ENCODE measurements at regions of chr19 and their contacts with region 1.

Region 1: DNA sequence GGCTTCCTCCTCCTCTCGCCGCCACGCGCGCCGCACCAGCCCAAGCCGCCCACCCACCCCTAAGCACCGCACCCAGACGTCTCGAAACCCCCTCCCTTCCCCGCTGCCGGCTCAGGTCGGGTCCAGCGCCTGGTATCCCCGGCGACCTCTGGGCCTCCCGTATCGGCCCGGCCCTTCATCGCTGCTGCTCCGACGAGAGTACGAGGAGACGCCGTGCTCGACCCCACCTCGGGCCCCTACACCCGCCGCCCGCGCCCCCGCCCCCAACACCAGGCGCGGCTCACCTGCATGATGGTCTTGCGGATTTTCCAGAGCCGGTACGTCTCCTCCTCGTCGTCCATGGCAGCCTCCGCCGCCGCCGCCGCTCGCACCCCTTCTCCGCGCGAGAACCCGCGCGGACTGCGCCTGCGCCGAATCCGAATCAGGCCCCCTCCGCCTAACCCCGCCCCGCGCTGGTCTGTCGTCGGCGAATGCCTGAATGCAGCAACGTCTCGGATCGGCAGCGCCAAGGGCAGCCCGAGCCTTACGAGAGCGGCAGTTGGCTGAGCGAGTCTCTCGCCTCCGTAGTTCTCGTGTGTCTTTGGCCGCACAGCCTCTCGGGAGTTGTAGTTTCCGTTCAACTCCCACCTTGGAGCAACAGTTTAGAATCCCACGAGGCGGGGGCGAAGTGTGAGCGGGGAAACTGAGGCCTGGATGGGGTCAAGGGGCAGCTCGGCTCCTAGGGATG is at the start of gene POLR2E:
- DNase-seq: peak; percentile 98 to 99 (median 98)
- H3K4me3 ChIP-seq: peak within 1 kb of the TSS; percentile 84
- H3K4me3 Mint-ChIP-seq: peak within 1 kb of the TSS; percentile 85 to 98 (median 89)
- H3K27ac ChIP-seq: peak within 1 kb of the TSS; percentile 59
- H3K27ac Mint-ChIP-seq: peak within 1 kb of the TSS; percentile 74 to 98 (median 90)
- H3K4me1 ChIP-seq: peaks cover 39% of the 10 kb centered on the region
- H3K4me1 Mint-ChIP-seq: peaks cover 34 to 56% (median 38%) of the 10 kb centered on the region in 3 donors
- H3K27me3 ChIP-seq: no peaks in the 10 kb centered on the region
- H3K27me3 Mint-ChIP-seq: peaks cover 0 to 2% of the 10 kb centered on the region in 2 donors
- total RNA-seq, gene POLR2E: 270 to 278 TPM

Region 2: GRCh38 chr19:900302-901111 is 194.6 kb before region 1 on chr19:
- CTCF ChIA-PET with region 1: no interaction called
- POLR2A ChIA-PET with region 1: interaction called, 13 read pairs
- DNase-seq: peak in 1 of 5 donors; percentile 30
- H3K4me3 ChIP-seq: no peak overlapping the region
- H3K4me3 Mint-ChIP-seq: no peak overlapping the region
- H3K27ac ChIP-seq: no peak overlapping the region
- H3K27ac Mint-ChIP-seq: peak overlapping the region in 4 of 8 donors; percentile 33 to 81 (median 60)
- H3K4me1 ChIP-seq: peaks cover 18% of the 10 kb centered on the region
- H3K4me1 Mint-ChIP-seq: peaks cover 0 to 39% (median 6%) of the 10 kb centered on the region in 3 donors
- H3K27me3 ChIP-seq: no peaks in the 10 kb centered on the region
- H3K27me3 Mint-ChIP-seq: no peaks in the 10 kb centered on the region

Region 3: GRCh38 chr19:1020868-1021425 is 74.2 kb before region 1 on chr19 and contains the start of gene TMEM259:
- CTCF ChIA-PET with region 1: interaction called, 3 read pairs
- POLR2A ChIA-PET with region 1: interaction called, 18 read pairs
- DNase-seq: peak; percentile 96 to 99 (median 98)
- H3K4me3 ChIP-seq: peak within 1 kb of the TSS; percentile 71
- H3K4me3 Mint-ChIP-seq: peak within 1 kb of the TSS; percentile 76 to 95 (median 89)
- H3K27ac ChIP-seq: peak within 1 kb of the TSS; percentile 97
- H3K27ac Mint-ChIP-seq: peak within 1 kb of the TSS; percentile 98 to 100 (median 99)
- H3K4me1 ChIP-seq: peaks cover 59% of the 10 kb centered on the region
- H3K4me1 Mint-ChIP-seq: peaks cover 24 to 60% (median 44%) of the 10 kb centered on the region in 3 donors
- H3K27me3 ChIP-seq: no peaks in the 10 kb centered on the region
- H3K27me3 Mint-ChIP-seq: peaks cover 0 to 6% of the 10 kb centered on the region in 2 donors
- total RNA-seq, gene TMEM259: 151 to 157 TPM

Region 4: GRCh38 chr19:1131738-1132551 is 36.8 kb after region 1 on chr19:
- CTCF ChIA-PET with region 1: no interaction called
- POLR2A ChIA-PET with region 1: interaction called, 10 read pairs
- DNase-seq: peak; percentile 80 to 90 (median 83)
- H3K4me3 ChIP-seq: peak overlapping the region; percentile 84
- H3K4me3 Mint-ChIP-seq: peak overlapping the region; percentile 78 to 92 (median 86)
- H3K27ac ChIP-seq: peak overlapping the region; percentile 87
- H3K27ac Mint-ChIP-seq: peak overlapping the region; percentile 85 to 99 (median 92)
- H3K4me1 ChIP-seq: peaks cover 36% of the 10 kb centered on the region
- H3K4me1 Mint-ChIP-seq: peaks cover 21 to 51% (median 24%) of the 10 kb centered on the region in 3 donors
- H3K27me3 ChIP-seq: no peaks in the 10 kb centered on the region
- H3K27me3 Mint-ChIP-seq: peaks cover 0 to 3% of the 10 kb centered on the region in 2 donors